Activated CD4-positive, alpha-beta memory T cell treated with anti-CD3 and anti-CD28 coated beads for 36 hours (primary cell): ENCODE measurements at regions of chr17 and their contacts with region 1.

Region 1: DNA sequence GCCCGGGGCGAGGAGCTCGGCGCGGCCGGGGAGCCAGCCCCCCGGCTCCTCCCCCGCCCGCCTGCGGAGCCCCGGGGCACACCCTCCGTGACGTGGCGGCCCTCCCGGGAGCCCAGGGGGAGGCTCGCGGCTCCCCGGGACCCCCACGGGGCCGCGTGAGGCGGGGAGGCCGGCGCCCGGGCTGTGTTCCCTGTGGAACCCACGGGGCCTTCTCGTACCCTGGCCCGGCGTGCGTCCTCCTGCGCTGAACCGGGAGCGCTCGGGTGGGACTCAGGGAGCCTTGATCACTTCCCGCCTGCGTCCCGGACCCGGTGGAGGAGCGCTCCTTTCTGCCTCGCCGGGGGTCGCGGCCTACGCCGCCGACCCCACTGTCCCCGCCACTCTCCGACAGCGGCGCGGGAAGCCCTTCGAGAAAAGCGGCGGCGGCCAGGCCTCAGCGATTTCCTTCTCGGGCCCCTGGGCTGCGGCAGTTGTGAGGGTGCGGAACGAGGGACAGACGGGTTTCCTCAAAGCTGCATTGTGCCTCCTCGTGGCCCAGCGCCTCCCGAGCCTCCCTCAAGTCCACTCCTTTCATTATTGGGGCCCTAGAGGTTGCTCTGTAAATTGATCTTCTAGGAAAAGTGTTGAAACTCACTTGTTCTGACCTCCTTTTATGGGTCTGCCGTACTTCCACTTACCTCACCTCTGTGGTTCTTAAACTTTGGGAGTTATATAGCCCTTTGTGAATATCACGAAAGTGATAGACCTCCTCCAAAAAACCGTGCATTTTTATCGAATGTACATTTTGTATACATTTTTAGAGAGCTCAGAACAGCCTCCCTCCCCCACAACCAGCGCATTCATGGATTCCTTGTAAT is 597 bp downstream of the LIG3 start:
- DNase-seq: peak; percentile 78
- H3K4me3 Mint-ChIP-seq: peak overlapping the region; percentile 90
- H3K27ac Mint-ChIP-seq: peak overlapping the region; percentile 93
- H3K4me1 Mint-ChIP-seq: peaks cover 52% of the 10 kb centered on the region
- H3K27me3 Mint-ChIP-seq: no peaks in the 10 kb centered on the region

Region 2: DNA sequence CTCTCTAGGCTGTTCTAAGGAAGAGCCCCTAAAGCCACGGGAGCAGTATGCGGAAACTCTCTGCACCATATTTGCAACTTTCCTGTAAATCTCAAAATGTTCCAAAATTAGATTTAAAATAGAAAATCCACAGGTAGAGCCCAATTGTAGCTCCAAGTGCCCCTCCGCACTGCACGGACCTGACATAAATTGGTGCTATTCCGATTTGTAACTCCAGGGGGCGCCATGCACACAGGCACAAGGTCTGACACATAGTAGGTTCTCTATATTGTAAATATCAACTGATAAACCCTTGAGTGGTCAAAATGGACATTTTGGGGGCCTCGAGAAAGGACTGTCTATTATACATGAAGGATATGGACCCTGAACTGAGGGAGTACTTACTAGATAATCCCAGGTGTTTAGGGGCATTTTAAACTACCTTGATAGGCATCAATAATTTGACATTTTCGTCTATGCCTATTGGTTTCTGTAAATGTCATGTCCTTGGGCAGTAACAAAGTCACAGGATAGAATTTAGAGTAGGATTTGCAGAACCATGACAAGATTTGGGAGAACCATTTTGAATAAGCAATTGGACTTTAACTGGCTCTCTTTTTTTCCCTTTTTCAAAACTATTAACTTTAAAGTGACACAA is 438.1 kb before region 1 on chr17:
- CTCF ChIA-PET with region 1: interaction called, 4 read pairs
- POLR2A ChIA-PET with region 1: no interaction called
- intact Hi-C with region 1: loop called (anchors 5 kb)
- DNase-seq: peak; percentile 52
- H3K4me3 Mint-ChIP-seq: no peak overlapping the region
- H3K27ac Mint-ChIP-seq: no peak overlapping the region
- H3K4me1 Mint-ChIP-seq: no peaks in the 10 kb centered on the region
- H3K27me3 Mint-ChIP-seq: peaks cover 18% of the 10 kb centered on the region

Region 3: DNA sequence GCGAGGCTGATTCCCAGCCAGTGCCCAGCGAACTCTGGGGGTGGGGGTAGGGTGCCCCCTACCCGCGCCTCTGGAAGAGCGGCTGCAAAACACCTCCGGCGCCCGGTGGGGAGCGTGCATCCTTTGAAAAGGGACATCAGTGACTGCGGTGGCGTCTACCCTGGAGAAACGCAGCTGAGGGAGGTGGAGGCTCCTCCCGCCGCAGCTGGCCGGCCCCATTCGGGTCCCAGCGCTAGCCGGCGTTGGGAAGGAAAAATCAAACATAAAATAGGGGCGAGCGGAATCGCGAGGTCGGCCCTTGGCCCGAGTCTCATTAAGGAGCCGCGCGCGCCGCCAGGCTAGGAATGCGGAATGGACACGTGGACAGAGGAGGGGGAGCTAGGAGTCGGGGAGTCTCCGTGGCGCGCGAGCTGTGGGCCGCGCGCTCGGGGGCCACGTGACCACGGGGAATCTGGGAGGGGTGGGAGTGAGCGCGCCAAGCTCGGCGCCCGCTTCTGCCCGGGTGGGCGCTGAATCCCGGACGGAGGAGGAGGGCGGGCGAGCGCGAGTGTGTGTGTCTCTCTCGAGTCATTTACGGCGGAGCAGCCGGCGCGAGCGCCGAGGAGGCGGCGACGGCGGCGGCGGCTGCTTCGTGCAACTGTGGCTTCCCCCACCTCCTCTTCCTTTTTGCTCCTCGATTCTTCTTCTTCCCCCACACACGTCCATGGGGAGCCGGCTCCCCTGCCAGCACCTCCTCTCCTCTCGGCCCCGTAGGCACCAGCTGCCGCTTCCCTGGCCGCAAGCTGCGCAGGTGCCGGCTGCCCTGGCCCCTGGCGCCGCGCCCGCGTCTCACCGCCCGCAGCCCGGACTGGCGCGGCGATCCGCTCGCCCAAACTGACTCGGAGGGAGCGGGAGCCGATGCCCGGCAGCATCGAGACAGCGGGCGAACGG is 401.6 kb before region 1 on chr17 and contains the start of gene TMEM132E:
- CTCF ChIA-PET with region 1: no interaction called
- POLR2A ChIA-PET with region 1: no interaction called
- intact Hi-C with region 1: no loop called
- DNase-seq: peak; percentile 19
- H3K4me3 Mint-ChIP-seq: peak within 1 kb of the TSS; percentile 71
- H3K27ac Mint-ChIP-seq: no peak within 1 kb of the TSS
- H3K4me1 Mint-ChIP-seq: peaks cover 15% of the 10 kb centered on the region
- H3K27me3 Mint-ChIP-seq: peaks cover 70% of the 10 kb centered on the region
- total RNA-seq, gene TMEM132E: not detected

Region 4: DNA sequence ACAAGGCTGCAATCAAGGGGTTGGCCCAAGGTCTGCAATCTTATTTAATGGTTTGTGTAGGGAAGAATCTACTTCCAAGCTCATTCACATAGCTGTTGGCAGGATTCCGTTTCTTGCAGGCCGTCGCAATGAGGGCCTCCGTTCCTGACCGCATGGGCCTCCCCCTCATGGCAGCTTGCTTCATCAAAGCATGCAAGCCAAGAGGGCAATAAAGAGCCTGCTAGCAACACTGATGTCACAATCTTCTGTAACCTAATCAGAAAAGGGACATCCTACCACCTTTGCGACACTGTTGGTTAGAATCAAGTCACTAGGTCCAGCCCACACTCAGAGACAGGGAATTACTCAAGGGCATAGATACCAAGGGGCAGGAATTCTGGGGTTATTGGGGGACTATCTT is 115.2 kb before region 1 on chr17:
- CTCF ChIA-PET with region 1: no interaction called
- POLR2A ChIA-PET with region 1: no interaction called
- intact Hi-C with region 1: no loop called
- DNase-seq: no peak
- H3K4me3 Mint-ChIP-seq: no peak overlapping the region
- H3K27ac Mint-ChIP-seq: no peak overlapping the region
- H3K4me1 Mint-ChIP-seq: peaks cover 3% of the 10 kb centered on the region
- H3K27me3 Mint-ChIP-seq: no peaks in the 10 kb centered on the region

Region 5: DNA sequence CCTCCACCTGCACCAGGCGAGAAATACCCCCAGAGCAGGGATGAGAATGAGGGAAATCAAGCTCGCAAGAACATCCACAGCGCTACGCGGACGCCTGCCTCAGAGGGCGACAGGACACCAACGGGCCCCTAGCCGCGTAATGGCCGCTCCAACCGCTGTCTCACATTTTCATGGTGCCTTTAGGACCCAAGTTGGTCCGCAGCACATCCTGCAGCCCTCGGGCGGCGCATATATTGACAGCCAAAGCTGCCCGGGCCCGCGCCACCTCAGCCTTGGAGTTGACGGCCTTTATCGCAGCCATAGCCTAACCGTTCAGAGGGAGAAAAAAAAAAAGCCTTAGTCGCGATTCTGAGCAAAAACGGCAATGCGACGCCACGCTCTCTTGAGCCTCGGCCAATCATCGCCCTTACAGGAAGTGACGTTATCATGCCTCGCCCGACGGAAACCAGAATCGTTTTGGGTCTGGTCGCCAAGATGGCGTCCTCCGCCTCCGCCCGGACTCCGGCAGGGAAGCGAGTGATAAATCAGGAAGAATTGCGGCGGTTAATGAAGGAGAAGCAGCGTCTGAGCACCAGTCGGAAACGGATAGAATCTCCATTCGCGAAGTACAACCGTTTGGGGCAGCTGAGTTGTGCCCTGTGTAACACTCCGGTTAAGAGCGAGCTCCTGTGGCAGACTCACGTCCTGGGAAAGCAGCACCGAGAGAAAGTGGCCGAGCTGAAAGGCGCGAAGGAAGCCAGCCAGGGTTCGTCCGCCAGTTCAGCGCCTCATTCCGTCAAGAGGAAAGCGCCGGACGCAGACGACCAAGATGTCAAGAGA is 19.6 kb before region 1 on chr17 and contains the starts of genes CCT6B and ZNF830:
- CTCF ChIA-PET with region 1: interaction called, 5 read pairs
- POLR2A ChIA-PET with region 1: interaction called, 13 read pairs
- intact Hi-C with region 1: no loop called
- DNase-seq: peak; percentile 96
- H3K4me3 Mint-ChIP-seq: peak within 1 kb of the TSS; percentile 100
- H3K27ac Mint-ChIP-seq: peak within 1 kb of the TSS; percentile 97
- H3K4me1 Mint-ChIP-seq: peaks cover 24% of the 10 kb centered on the region
- H3K27me3 Mint-ChIP-seq: no peaks in the 10 kb centered on the region
- total RNA-seq, gene CCT6B: 1.1 to 1.3 TPM
- total RNA-seq, gene ZNF830: 19.5 to 20.7 TPM

Region 6: GRCh38 chr17:35022536-35023063 is 41.7 kb after region 1 on chr17:
- CTCF ChIA-PET with region 1: interaction called, 3 read pairs
- POLR2A ChIA-PET with region 1: interaction called, 9 read pairs
- intact Hi-C with region 1: loop called (anchors 5 kb)
- DNase-seq: peak; percentile 90
- H3K4me3 Mint-ChIP-seq: peak overlapping the region; percentile 81
- H3K27ac Mint-ChIP-seq: peak overlapping the region; percentile 100
- H3K4me1 Mint-ChIP-seq: peaks cover 46% of the 10 kb centered on the region
- H3K27me3 Mint-ChIP-seq: no peaks in the 10 kb centered on the region

Region 7: GRCh38 chr17:35046740-35047283 is 65.9 kb after region 1 on chr17:
- CTCF ChIA-PET with region 1: no interaction called
- POLR2A ChIA-PET with region 1: interaction called, 4 read pairs
- intact Hi-C with region 1: loop called (anchors 2 kb)
- DNase-seq: peak; percentile 82
- H3K4me3 Mint-ChIP-seq: peak overlapping the region; percentile 72
- H3K27ac Mint-ChIP-seq: peak overlapping the region; percentile 94
- H3K4me1 Mint-ChIP-seq: peaks cover 69% of the 10 kb centered on the region
- H3K27me3 Mint-ChIP-seq: no peaks in the 10 kb centered on the region